ENCODE measurements at regions of chr13 and their contacts with region 1.

Region 1: GRCh38 chr13:77697217-77698103 is at the start of gene SLAIN1:
- DNase-seq: peak; percentile 78 to 90 (median 85)
- ATAC-seq: peak; percentile 90
- H3K4me3 ChIP-seq: peak within 1 kb of the TSS; percentile 94
- H3K4me3 Mint-ChIP-seq: peak within 1 kb of the TSS; percentile 90 to 100 (median 95)
- H3K27ac ChIP-seq: peak within 1 kb of the TSS; percentile 87
- H3K27ac Mint-ChIP-seq: peak within 1 kb of the TSS; percentile 66 to 96 (median 86)
- H3K4me1 ChIP-seq: peaks cover 17 to 18% of the 10 kb centered on the region in 2 donors
- H3K4me1 Mint-ChIP-seq: peaks cover 13 to 53% (median 43%) of the 10 kb centered on the region in 7 donors
- H3K27me3 ChIP-seq: no peaks in the 10 kb centered on the region
- H3K27me3 Mint-ChIP-seq: peaks cover 0 to 40% (median 0%) of the 10 kb centered on the region in 5 donors
- total RNA-seq, gene SLAIN1: 28.3 to 67.8 (median 42.4) TPM

Region 2: GRCh38 chr13:76886292-76887075 is 811.0 kb before region 1 on chr13 and contains the start of gene KCTD12:
- CTCF ChIA-PET with region 1: no interaction called
- POLR2A ChIA-PET with region 1: interaction called, 4 read pairs
- intact Hi-C with region 1: loop called (anchors 1 kb)
- DNase-seq: peak; percentile 73 to 84 (median 80)
- ATAC-seq: peak; percentile 86
- H3K4me3 ChIP-seq: peak within 1 kb of the TSS; percentile 62
- H3K4me3 Mint-ChIP-seq: peak within 1 kb of the TSS; percentile 88 to 95 (median 92)
- H3K27ac ChIP-seq: peak within 1 kb of the TSS; percentile 55
- H3K27ac Mint-ChIP-seq: peak within 1 kb of the TSS; percentile 63 to 85 (median 76)
- H3K4me1 ChIP-seq: peaks cover 4 to 8% of the 10 kb centered on the region in 2 donors
- H3K4me1 Mint-ChIP-seq: peaks cover 20 to 37% (median 32%) of the 10 kb centered on the region in 7 donors
- H3K27me3 ChIP-seq: peaks cover 0 to 3% of the 10 kb centered on the region in 2 donors
- H3K27me3 Mint-ChIP-seq: peaks cover 0 to 47% (median 8%) of the 10 kb centered on the region in 5 donors
- total RNA-seq, gene KCTD12: 7.6 to 48.0 (median 14.0) TPM

Region 3: GRCh38 chr13:77480066-77480465 is 217.4 kb before region 1 on chr13:
- CTCF ChIA-PET with region 1: interaction called, 3 read pairs
- POLR2A ChIA-PET with region 1: interaction called, 3 read pairs
- intact Hi-C with region 1: loop called in 1 of 2 experiments (anchors 5 kb)
- DNase-seq: no peak
- ATAC-seq: no peak
- H3K4me3 ChIP-seq: no peak overlapping the region
- H3K4me3 Mint-ChIP-seq: no peak overlapping the region
- H3K27ac ChIP-seq: no peak overlapping the region
- H3K27ac Mint-ChIP-seq: no peak overlapping the region
- H3K4me1 ChIP-seq: no peaks in the 10 kb centered on the region
- H3K4me1 Mint-ChIP-seq: peaks cover 0 to 14% (median 9%) of the 10 kb centered on the region in 7 donors
- H3K27me3 ChIP-seq: no peaks in the 10 kb centered on the region
- H3K27me3 Mint-ChIP-seq: peaks cover 0 to 6% (median 0%) of the 10 kb centered on the region in 5 donors

Region 4: GRCh38 chr13:77653301-77653700 is 44.2 kb before region 1 on chr13:
- CTCF ChIA-PET with region 1: no interaction called
- POLR2A ChIA-PET with region 1: no interaction called
- intact Hi-C with region 1: no loop called
- DNase-seq: no peak
- ATAC-seq: no peak
- H3K4me3 ChIP-seq: no peak overlapping the region
- H3K4me3 Mint-ChIP-seq: no peak overlapping the region
- H3K27ac ChIP-seq: no peak overlapping the region
- H3K27ac Mint-ChIP-seq: no peak overlapping the region
- H3K4me1 ChIP-seq: no peaks in the 10 kb centered on the region
- H3K4me1 Mint-ChIP-seq: no peaks in the 10 kb centered on the region
- H3K27me3 ChIP-seq: no peaks in the 10 kb centered on the region
- H3K27me3 Mint-ChIP-seq: peaks cover 0 to 8% (median 6%) of the 10 kb centered on the region in 5 donors

Region 5: GRCh38 chr13:77729502-77730221 is 32.2 kb after region 1 on chr13:
- CTCF ChIA-PET with region 1: no interaction called
- POLR2A ChIA-PET with region 1: no interaction called
- intact Hi-C with region 1: loop called (anchors 1 to 5 kb)
- DNase-seq: peak in 1 of 9 donors; percentile 44
- ATAC-seq: peak; percentile 40
- H3K4me3 ChIP-seq: no peak overlapping the region
- H3K4me3 Mint-ChIP-seq: peak overlapping the region in 2 of 10 donors; percentile 3 to 81
- H3K27ac ChIP-seq: no peak overlapping the region
- H3K27ac Mint-ChIP-seq: peak overlapping the region in 4 of 9 donors; percentile 3 to 88 (median 20)
- H3K4me1 ChIP-seq: peaks cover 0 to 4% of the 10 kb centered on the region in 2 donors
- H3K4me1 Mint-ChIP-seq: peaks cover 22 to 51% (median 34%) of the 10 kb centered on the region in 7 donors
- H3K27me3 ChIP-seq: no peaks in the 10 kb centered on the region
- H3K27me3 Mint-ChIP-seq: no peaks in the 10 kb centered on the region

Region 6: DNA sequence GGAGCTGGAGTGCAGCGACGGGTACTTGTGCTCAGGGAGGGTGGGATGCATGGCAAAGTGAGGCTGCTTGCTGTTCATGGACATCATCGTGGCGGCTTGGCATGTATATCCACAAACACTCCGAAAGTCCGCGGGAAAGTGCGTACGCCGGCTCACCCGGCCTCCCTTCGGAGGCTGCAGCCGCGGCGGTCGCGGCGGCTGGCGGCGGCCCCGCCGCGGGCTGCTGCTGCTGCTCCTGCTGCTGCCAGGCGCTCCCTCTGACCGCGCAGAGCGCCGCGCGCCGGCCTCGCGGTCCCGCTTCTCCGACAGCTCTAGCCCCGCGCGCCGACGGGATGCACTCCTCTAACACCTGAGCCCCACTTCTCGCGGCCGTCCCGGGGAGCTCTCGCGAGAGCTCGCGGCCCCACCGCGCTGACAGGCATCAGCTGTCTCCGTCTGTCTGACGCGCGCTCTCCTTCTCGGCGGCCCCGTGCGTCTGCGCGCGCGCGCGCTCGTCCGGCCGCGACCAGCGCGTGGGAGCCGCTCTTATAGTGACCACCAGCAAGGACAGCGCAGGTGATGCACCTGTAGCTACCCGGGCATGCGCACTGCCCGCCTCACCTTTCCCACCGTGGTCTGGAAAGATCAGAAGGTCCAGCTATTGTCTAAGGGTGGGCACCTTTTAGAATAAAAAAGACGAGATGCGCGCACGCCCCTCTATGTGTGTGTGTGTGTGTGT is 905.9 kb after region 1 on chr13 and contains the start of gene POU4F1:
- CTCF ChIA-PET with region 1: no interaction called
- POLR2A ChIA-PET with region 1: no interaction called
- intact Hi-C with region 1: loop called (anchors 5 to 10 kb)
- DNase-seq: peak in 4 of 9 donors; percentile 44 to 70 (median 50)
- ATAC-seq: peak; percentile 59
- H3K4me3 ChIP-seq: peak within 1 kb of the TSS; percentile 43
- H3K4me3 Mint-ChIP-seq: peak within 1 kb of the TSS; percentile 76 to 95 (median 85)
- H3K27ac ChIP-seq: no peak within 1 kb of the TSS
- H3K27ac Mint-ChIP-seq: peak within 1 kb of the TSS in 6 of 9 donors; percentile 7 to 89 (median 68)
- H3K4me1 ChIP-seq: peaks cover 4 to 31% of the 10 kb centered on the region in 2 donors
- H3K4me1 Mint-ChIP-seq: peaks cover 35 to 70% (median 56%) of the 10 kb centered on the region in 7 donors
- H3K27me3 ChIP-seq: peaks cover 44 to 74% of the 10 kb centered on the region in 2 donors
- H3K27me3 Mint-ChIP-seq: peaks cover 82 to 91% (median 88%) of the 10 kb centered on the region in 5 donors
- total RNA-seq, gene POU4F1: 0.08 to 0.22 (median 0.15) TPM in 3 of 5 experiments, not detected in the others

Region 7: GRCh38 chr13:79480954-79481684 is 1783.7 kb after region 1 on chr13 and contains the start of gene NDFIP2:
- CTCF ChIA-PET with region 1: no interaction called
- POLR2A ChIA-PET with region 1: no interaction called
- intact Hi-C with region 1: loop called in 1 of 2 experiments (anchors 5 kb)
- DNase-seq: peak; percentile 66 to 96 (median 78)
- ATAC-seq: peak; percentile 89
- H3K4me3 ChIP-seq: peak within 1 kb of the TSS; percentile 79
- H3K4me3 Mint-ChIP-seq: peak within 1 kb of the TSS; percentile 90 to 99 (median 92)
- H3K27ac ChIP-seq: peak within 1 kb of the TSS; percentile 28
- H3K27ac Mint-ChIP-seq: peak within 1 kb of the TSS; percentile 71 to 95 (median 90)
- H3K4me1 ChIP-seq: peaks cover 6 to 12% of the 10 kb centered on the region in 2 donors
- H3K4me1 Mint-ChIP-seq: peaks cover 24 to 66% (median 46%) of the 10 kb centered on the region in 7 donors
- H3K27me3 ChIP-seq: no peaks in the 10 kb centered on the region
- H3K27me3 Mint-ChIP-seq: peaks cover 0 to 7% (median 0%) of the 10 kb centered on the region in 5 donors
- total RNA-seq, gene NDFIP2: 2.6 to 123 (median 4.9) TPM

Measured in naive thymus-derived CD4-positive, alpha-beta T cell (primary cell).